ENCODE measurements at regions of chr11 and their contacts with region 1.

Region 1: GRCh38 chr11:111808063-111808588 is 41.9 kb upstream of the PPP2R1B start:
- DNase-seq: no peak
- H3K4me3 ChIP-seq: no peak overlapping the region
- H3K27ac ChIP-seq: no peak overlapping the region
- H3K4me1 ChIP-seq: no peaks in the 10 kb centered on the region
- H3K27me3 ChIP-seq: no peaks in the 10 kb centered on the region
- CTCF ChIP-seq: no peak
- EP300 ChIP-seq: no peak
- RAD21 ChIP-seq: no peak

Region 2: DNA sequence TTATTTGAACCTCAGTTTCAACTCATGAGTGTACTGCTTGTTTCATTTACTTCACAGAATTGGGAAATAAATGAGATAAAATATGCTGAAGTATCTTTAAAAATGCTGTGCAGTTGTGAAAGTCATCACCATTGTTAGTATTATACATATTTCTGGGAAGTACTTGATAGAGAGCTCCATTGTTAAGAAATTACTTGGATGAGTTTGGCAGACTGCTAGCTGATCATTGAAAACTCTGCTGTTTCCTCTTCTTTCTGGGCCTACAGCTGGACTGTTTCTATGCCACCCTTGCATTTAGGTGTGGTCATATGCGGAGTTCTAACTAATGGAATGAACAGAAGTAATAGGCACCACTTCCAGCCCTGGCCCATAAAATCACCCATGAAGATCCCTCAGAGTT is 195.9 kb before region 1 on chr11:
- CTCF ChIA-PET with region 1: no interaction called
- POLR2A ChIA-PET with region 1: no interaction called
- DNase-seq: no peak
- H3K4me3 ChIP-seq: no peak overlapping the region
- H3K27ac ChIP-seq: no peak overlapping the region
- H3K4me1 ChIP-seq: peaks cover 0 to 15% of the 10 kb centered on the region in 2 experiments; a peak in 2 of 4 replicates
- H3K27me3 ChIP-seq: no peaks in the 10 kb centered on the region
- CTCF ChIP-seq: no peak
- EP300 ChIP-seq: no peak
- RAD21 ChIP-seq: no peak

Region 3: DNA sequence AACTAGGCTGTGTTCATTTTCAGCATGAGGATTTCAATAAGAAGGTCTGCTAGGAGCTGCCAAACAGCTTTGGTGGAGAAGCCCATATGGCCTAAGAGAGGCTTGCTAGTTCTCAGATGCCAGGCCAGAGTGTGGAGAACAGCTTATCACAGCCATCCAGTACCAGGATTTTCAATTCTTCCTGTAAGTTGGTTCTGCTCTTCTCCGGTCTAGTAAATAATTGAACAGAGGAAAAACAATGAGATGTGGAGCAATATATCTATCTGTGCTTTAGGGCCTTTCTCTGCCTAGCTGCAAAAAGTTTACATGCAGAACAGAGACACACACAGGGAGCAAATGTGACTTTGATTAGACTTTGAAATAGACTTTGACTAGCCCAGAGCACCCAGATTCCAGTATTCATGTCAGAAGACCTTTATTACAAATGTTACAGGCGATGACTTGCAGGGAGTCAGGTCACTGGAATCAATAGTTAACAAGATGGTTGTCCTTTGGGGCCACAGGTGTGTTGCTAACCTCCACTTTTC is 22.2 kb before region 1 on chr11:
- CTCF ChIA-PET with region 1: no interaction called
- POLR2A ChIA-PET with region 1: no interaction called
- DNase-seq: no peak
- H3K4me3 ChIP-seq: no peak overlapping the region
- H3K27ac ChIP-seq: no peak overlapping the region
- H3K4me1 ChIP-seq: peaks cover 5 to 10% of the 10 kb centered on the region in 2 experiments; a peak in 3 of 4 replicates
- H3K27me3 ChIP-seq: no peaks in the 10 kb centered on the region
- CTCF ChIP-seq: no peak
- EP300 ChIP-seq: no peak
- RAD21 ChIP-seq: no peak

Region 4: DNA sequence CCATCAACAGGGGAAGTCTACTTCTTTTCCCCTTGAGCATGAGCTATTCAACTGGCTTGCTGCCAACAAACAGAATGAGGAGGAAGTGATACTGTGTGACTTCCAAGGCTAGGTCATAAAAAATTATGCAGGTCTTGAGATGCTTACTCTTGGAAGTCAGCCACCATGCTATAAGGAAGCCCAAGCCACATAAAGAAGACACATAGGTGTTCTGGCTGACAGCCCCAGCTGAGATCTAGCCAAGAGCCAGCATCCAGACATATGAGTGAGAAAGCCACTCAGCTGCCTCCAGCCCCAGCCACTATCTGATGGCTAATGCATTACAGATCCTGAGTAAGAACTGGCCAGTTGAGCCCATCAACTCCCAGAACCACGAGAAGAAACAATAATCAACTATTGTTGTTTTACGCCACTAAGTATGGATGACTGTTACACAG is 11.0 kb before region 1 on chr11:
- CTCF ChIA-PET with region 1: interaction called, 11 read pairs
- POLR2A ChIA-PET with region 1: no interaction called
- DNase-seq: no peak
- H3K4me3 ChIP-seq: no peak overlapping the region
- H3K27ac ChIP-seq: peak overlapping the region; percentile 28 to 35; a peak in 3 of 4 replicates
- H3K4me1 ChIP-seq: peaks cover 18 to 26% of the 10 kb centered on the region in 2 experiments; a peak in 3 of 4 replicates
- H3K27me3 ChIP-seq: no peaks in the 10 kb centered on the region
- CTCF ChIP-seq: no peak
- EP300 ChIP-seq: no peak
- RAD21 ChIP-seq: no peak

Measured in SK-N-SH (cell line).